Heart left ventricle (tissue), 16 donors: ENCODE measurements at regions of chr9 and their contacts with region 1.

Region 1: DNA sequence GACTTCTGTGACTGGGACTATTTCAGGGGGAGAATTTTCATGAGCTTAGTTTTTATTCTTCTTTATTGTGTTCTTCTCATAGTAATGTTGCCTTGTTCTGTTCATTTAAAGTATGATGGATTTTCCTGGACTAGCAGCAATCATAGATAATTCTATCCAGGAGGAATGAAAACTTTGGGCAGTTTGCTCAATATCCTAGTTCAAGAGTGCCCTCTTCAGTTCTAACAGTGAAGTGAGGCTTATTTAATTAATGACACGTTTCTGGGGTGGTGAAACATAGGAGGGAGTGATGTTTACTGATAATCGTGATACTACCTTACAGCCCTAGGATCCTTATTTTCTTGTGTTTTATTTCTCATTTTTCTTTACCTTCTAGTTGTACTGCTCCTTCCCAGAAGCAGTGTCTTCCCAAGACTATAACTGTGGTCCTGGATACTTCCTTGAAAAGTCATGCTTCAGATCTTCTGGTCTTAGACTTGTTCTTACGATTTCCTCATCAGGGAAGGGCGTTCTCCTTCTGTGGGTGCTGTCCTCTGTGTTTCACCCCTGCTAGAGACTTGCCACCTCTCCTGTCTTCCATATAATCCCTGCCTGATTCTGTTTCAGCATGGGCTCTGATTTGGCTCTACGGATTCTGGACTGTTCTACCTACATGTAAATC is 57.4 kb downstream of the CFAP95 start:
- DNase-seq: no peak
- ATAC-seq: peak in 3 of 4 donors; percentile 48 to 67 (median 52)
- H3K4me3 ChIP-seq: no peak overlapping the region
- H3K27ac ChIP-seq: no peak overlapping the region
- H3K4me1 ChIP-seq: peaks cover 0 to 14% (median 0%) of the 10 kb centered on the region in 12 donors
- H3K27me3 ChIP-seq: no peaks in the 10 kb centered on the region
- CTCF ChIP-seq: peak; percentile 39 to 69 (median 55)
- POLR2A ChIP-seq: no peak

Region 2: GRCh38 chr9:69421908-69422801 is 455.8 kb before region 1 on chr9:
- intact Hi-C with region 1: loop called (anchors 2 to 5 kb)
- DNase-seq: peak in 3 of 5 donors; percentile 57 to 60 (median 57)
- ATAC-seq: peak; percentile 55 to 80 (median 76)
- H3K4me3 ChIP-seq: no peak overlapping the region
- H3K27ac ChIP-seq: no peak overlapping the region
- H3K4me1 ChIP-seq: no peaks in the 10 kb centered on the region
- H3K27me3 ChIP-seq: peaks cover 0 to 5% (median 0%) of the 10 kb centered on the region in 9 donors
- CTCF ChIP-seq: peak; percentile 69 to 82 (median 78)
- POLR2A ChIP-seq: no peak

Region 3: GRCh38 chr9:69564557-69564956 is 313.4 kb before region 1 on chr9:
- intact Hi-C with region 1: loop called in 2 of 10 experiments (anchors 10 kb)
- DNase-seq: no peak
- ATAC-seq: peak in 1 of 4 donors; percentile 42
- H3K4me3 ChIP-seq: no peak overlapping the region
- H3K27ac ChIP-seq: no peak overlapping the region
- H3K4me1 ChIP-seq: peaks cover 0 to 18% (median 4%) of the 10 kb centered on the region in 12 donors
- H3K27me3 ChIP-seq: no peaks in the 10 kb centered on the region
- CTCF ChIP-seq: no peak
- POLR2A ChIP-seq: no peak

Region 4: GRCh38 chr9:69745716-69746437 is 132.1 kb before region 1 on chr9:
- intact Hi-C with region 1: loop called in 3 of 10 experiments (anchors 10 kb)
- DNase-seq: no peak
- ATAC-seq: peak in 1 of 4 donors; percentile 34
- H3K4me3 ChIP-seq: no peak overlapping the region
- H3K27ac ChIP-seq: peak overlapping the region in 1 of 12 donors; percentile 7
- H3K4me1 ChIP-seq: peaks cover 0 to 36% (median 13%) of the 10 kb centered on the region in 12 donors
- H3K27me3 ChIP-seq: no peaks in the 10 kb centered on the region
- CTCF ChIP-seq: peak in 2 of 12 donors; percentile 28
- POLR2A ChIP-seq: no peak

Region 5: GRCh38 chr9:69809304-69809863 is 68.6 kb before region 1 on chr9:
- intact Hi-C with region 1: loop called in 2 of 10 experiments (anchors 10 kb)
- DNase-seq: no peak
- ATAC-seq: no peak
- H3K4me3 ChIP-seq: no peak overlapping the region
- H3K27ac ChIP-seq: no peak overlapping the region
- H3K4me1 ChIP-seq: peaks cover 0 to 26% (median 3%) of the 10 kb centered on the region in 12 donors
- H3K27me3 ChIP-seq: peaks cover 0 to 3% (median 0%) of the 10 kb centered on the region in 9 donors
- CTCF ChIP-seq: peak in 2 of 12 donors; percentile 5 to 9
- POLR2A ChIP-seq: no peak

Region 6: DNA sequence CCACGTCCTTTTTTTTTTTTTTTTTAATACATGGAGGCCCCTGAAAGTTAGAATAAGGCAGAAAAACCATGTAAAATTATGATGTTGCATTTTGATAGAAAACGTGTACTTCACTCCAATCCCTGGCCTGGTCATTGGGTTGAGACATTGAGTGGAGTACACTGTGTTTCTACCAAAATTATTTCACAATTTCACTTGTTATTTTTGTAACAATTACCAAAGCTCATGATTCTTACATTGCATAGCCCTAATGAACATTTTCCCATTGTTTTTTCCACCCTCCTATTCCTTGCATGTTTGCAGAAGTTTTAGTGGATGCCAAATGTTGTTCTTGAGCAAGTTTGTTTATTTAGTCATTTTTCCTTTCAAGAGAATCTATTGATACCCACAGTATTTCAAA is 187.6 kb after region 1 on chr9:
- intact Hi-C with region 1: no loop called
- DNase-seq: no peak
- ATAC-seq: peak in 3 of 4 donors; percentile 12 to 76 (median 74)
- H3K4me3 ChIP-seq: no peak overlapping the region
- H3K27ac ChIP-seq: peak overlapping the region in 2 of 12 donors; percentile 15 to 92
- H3K4me1 ChIP-seq: peaks cover 0 to 42% (median 11%) of the 10 kb centered on the region in 12 donors
- H3K27me3 ChIP-seq: no peaks in the 10 kb centered on the region
- CTCF ChIP-seq: no peak
- POLR2A ChIP-seq: no peak